AG04449 (cell line): ENCODE measurements at regions of chr6 and their contacts with region 1.

Region 1: DNA sequence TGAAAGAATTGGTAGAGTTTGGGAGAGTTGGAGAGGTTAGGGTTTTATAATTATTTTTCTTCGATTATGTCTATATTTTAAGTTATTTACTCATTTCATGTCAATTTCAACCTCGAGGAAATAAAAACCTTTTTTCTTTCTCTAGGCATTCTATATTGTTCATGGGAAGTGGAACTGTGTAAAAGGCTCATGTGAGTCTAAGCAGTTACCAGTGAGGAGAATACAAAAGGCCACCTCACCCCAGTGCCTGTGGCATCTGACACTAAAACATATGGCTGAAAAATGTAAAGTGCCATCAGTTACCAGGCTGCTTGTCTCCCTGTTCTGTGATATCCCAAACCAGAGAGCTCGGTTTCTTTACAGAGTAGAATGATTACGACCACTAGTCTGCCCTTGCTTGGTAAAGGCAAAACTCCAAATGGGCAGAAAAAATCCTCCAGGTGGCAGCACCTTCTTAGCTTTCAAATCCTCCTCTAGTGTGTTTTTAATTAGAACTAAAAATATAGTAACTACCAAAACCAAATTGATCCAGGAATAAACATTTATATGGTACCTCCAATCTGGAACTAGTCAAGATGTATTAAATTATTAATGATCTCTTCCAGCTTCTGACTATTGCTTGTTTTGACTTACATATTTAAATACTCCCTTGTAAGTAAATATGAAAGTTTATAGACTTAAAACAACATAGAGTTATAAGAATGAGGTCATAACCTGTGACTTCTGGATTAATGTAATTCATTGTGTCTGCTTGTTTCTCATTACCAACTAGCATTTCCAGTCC is 122.6 kb upstream of the MCHR2 start:
- DNase-seq: no peak
- H3K4me3 ChIP-seq: no peak overlapping the region
- CTCF ChIP-seq: peak; percentile 50

Region 2: DNA sequence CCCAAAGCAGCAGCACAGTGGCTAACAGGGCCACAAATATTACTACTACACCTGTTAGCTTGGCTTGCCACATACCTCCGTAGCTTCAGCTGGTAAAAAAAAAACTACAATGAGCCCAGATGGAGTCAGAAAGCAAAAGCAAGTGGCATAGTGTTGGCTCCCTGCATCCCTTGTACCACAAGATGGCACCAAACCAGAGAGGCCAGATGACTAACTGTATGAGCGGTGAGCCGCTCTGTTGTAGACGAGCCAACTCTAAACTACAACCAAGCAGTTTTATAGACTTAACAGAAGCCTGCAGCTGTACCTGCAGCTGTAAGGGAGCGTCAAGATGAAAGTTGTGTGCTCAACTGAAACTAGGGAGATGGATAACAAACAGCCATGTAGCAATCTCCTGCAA is 38.1 kb before region 1 on chr6:
- CTCF ChIA-PET with region 1: no interaction called
- POLR2A ChIA-PET with region 1: no interaction called
- DNase-seq: no peak
- H3K4me3 ChIP-seq: no peak overlapping the region
- CTCF ChIP-seq: peak; percentile 43

Region 3: GRCh38 chr6:100099189-100100074 is 17.2 kb before region 1 on chr6:
- CTCF ChIA-PET with region 1: interaction called, 52 read pairs
- POLR2A ChIA-PET with region 1: no interaction called
- DNase-seq: no peak
- H3K4me3 ChIP-seq: no peak overlapping the region
- CTCF ChIP-seq: peak; percentile 31

Region 4: GRCh38 chr6:100126790-100127484 is 10.3 kb after region 1 on chr6:
- CTCF ChIA-PET with region 1: interaction called, 14 read pairs
- POLR2A ChIA-PET with region 1: no interaction called
- DNase-seq: no peak
- H3K4me3 ChIP-seq: no peak overlapping the region
- CTCF ChIP-seq: no peak

Region 5: GRCh38 chr6:100464903-100465700 is 348.5 kb after region 1 on chr6 and contains the start of gene SIM1:
- CTCF ChIA-PET with region 1: interaction called, 46 read pairs
- POLR2A ChIA-PET with region 1: interaction called, 3 read pairs
- DNase-seq: peak; percentile 74
- H3K4me3 ChIP-seq: peak within 1 kb of the TSS; percentile 83
- CTCF ChIP-seq: no peak

Region 6: DNA sequence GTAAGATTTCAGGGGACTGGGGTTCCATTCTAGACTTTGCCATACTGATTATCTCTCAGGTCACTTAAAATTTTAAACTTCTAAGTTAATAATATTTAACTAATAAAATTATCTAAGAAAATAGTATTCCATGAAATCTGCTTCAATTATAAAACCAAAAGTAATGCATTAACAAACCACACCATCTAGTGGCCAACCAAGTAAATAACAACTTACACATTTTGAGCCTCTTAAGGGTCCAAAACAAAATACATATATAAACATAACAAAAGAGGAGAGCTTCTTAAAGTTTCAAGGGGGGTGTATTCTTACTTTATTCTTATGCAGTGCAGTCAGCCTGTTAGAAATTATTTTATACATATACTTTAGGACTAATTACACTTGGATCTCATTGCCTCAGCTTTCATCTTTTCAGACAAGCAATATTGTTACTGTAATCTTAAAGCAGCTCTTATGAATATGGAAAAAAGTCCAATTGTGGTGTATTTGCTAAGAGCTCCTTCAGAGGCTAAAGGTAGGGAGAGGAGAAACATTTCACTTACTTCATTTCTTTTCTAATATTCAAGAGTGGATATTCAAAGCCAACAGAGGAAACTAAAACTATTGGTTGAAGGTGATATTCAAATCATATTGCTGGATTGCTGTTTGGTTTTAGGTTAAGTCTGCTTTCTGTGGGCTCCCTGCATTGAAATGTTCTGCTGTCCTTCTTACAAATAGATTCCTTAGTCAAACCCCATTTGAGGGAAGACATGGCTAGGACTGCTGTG is 547.9 kb after region 1 on chr6:
- CTCF ChIA-PET with region 1: interaction called, 100 read pairs
- POLR2A ChIA-PET with region 1: no interaction called
- DNase-seq: no peak
- H3K4me3 ChIP-seq: no peak overlapping the region
- CTCF ChIP-seq: peak; percentile 37